ENCODE measurements at regions of chr2 and their contacts with region 1.

Region 1: GRCh38 chr2:54838585-54839035 is 115.1 kb downstream of the EML6 start:
- DNase-seq: peak; percentile 78
- H3K4me3 ChIP-seq: no peak overlapping the region
- H3K27ac ChIP-seq: no peak overlapping the region
- H3K4me1 ChIP-seq: no peaks in the 10 kb centered on the region
- H3K27me3 ChIP-seq: no peaks in the 10 kb centered on the region
- CTCF ChIP-seq: peak; percentile 80 to 87
- POLR2A ChIP-seq: no peak

Region 2: GRCh38 chr2:54106631-54107454 is 731.8 kb before region 1 on chr2:
- CTCF ChIA-PET with region 1: interaction called, 96 read pairs
- POLR2A ChIA-PET with region 1: no interaction called
- dilution Hi-C with region 1: no loop called
- intact Hi-C with region 1: loop called (anchors 2 kb)
- DNase-seq: peak; percentile 69
- H3K4me3 ChIP-seq: no peak overlapping the region
- H3K27ac ChIP-seq: no peak overlapping the region
- H3K4me1 ChIP-seq: peaks cover 11% of the 10 kb centered on the region
- H3K27me3 ChIP-seq: no peaks in the 10 kb centered on the region
- CTCF ChIP-seq: peak; percentile 53 to 56
- POLR2A ChIP-seq: no peak

Region 3: GRCh38 chr2:54558188-54559005 is 280.2 kb before region 1 on chr2:
- CTCF ChIA-PET with region 1: no interaction called
- POLR2A ChIA-PET with region 1: no interaction called
- dilution Hi-C with region 1: no loop called
- intact Hi-C with region 1: no loop called
- DNase-seq: peak; percentile 86
- H3K4me3 ChIP-seq: peak overlapping the region; percentile 50 to 99 (median 99)
- H3K27ac ChIP-seq: peak overlapping the region; percentile 99
- H3K4me1 ChIP-seq: peaks cover 42% of the 10 kb centered on the region
- H3K27me3 ChIP-seq: no peaks in the 10 kb centered on the region
- CTCF ChIP-seq: no peak
- POLR2A ChIP-seq: peak; percentile 53

Region 4: DNA sequence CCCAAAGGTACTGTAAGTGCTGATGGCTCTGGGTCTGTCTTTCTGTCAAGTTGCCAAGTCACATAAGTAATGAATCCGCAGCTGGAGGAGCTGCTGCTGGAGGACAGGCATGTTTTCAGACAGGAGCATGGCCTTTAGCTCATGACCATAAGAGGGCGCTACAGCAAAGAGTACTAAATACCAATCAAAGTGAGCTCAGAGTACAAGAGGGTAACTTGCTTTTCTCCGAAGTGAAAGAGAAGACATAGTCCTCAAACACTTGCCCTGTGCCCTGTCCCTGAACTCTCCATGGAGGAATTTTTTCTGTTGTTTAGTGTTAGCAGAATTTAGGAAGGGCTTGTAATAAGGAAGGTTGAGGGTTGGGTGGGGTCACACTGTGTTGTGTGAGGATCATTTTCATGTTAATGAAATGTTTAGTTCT is 173.2 kb before region 1 on chr2:
- CTCF ChIA-PET with region 1: interaction called, 104 read pairs
- POLR2A ChIA-PET with region 1: no interaction called
- dilution Hi-C with region 1: no loop called
- intact Hi-C with region 1: loop called (anchors 2 kb)
- DNase-seq: peak; percentile 76
- H3K4me3 ChIP-seq: no peak overlapping the region
- H3K27ac ChIP-seq: no peak overlapping the region
- H3K4me1 ChIP-seq: peaks cover 16% of the 10 kb centered on the region
- H3K27me3 ChIP-seq: no peaks in the 10 kb centered on the region
- CTCF ChIP-seq: peak; percentile 74
- POLR2A ChIP-seq: no peak

Region 5: DNA sequence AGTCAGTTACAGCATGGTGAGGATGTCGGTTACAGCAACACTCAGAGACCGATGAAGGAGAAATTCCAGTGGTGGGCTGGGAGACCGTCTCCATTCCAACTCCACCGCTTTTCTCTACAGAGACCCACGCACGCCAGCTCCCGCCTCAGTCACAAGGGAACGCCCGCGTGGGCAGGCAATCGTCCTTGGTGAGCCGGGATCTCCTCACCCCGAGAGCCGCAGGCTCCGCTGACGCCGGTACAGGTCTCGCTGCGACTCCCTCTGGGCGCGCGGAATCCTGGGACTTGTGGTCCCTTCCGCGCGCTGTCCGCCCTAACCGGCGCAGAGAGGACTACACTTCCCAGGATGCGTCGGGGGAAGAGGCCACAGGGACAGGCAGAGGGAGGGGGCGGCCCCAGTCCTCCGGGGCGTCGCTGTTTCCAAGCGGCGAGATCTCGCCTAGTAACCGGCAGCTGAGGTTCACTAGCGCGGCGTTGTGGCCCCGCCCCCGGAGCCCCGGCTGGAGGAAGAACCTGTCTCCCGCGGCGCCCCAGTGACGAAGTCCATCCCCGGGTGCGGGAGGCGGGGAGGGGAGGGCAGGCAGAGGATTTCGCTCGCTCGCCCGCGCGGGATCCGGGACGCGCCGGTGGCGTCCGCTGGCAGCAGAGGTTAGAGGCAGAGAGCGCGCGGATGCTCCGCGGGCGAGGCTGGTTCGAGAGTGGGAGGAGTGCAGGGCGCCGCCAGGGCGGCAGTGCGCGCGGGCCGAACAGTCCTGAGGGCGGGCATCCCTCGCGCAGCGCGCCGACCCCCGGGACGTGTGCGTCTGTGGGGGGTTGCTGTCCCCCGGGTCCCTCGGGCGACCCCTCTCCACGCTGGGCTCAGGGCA is 115.2 kb before region 1 on chr2 and contains the start of gene EML6:
- CTCF ChIA-PET with region 1: interaction called, 48 read pairs
- POLR2A ChIA-PET with region 1: no interaction called
- dilution Hi-C with region 1: no loop called
- intact Hi-C with region 1: loop called (anchors 1 kb)
- DNase-seq: peak; percentile 99
- H3K4me3 ChIP-seq: peak within 1 kb of the TSS; percentile 86 to 99 (median 96)
- H3K27ac ChIP-seq: peak within 1 kb of the TSS; percentile 78
- H3K4me1 ChIP-seq: peaks cover 22% of the 10 kb centered on the region
- H3K27me3 ChIP-seq: peaks cover 11 to 15% of the 10 kb centered on the region in 2 experiments
- CTCF ChIP-seq: peak; percentile 4 to 36
- POLR2A ChIP-seq: peak; percentile 88
- total RNA-seq, gene EML6: 1.3 and 2.1 TPM in 2 replicates

Region 6: DNA sequence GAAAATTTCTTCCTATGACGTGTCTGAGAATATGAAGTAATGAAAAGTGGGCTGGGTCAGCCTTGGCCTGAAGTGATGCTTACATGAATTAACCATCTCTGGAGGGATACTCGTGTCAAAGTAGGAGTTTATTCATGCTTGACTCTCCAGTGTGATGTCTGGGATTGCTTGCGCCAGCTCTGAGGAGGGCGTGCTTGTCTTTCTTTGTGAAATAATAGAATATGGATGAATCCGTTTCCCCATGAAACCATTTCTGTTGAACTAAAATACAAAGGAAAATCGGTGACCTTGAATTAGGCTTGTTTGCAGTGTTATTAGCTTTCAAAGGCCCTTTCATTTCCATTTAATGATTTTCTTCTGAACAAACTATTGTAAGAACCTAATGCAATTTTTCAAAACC is 37.3 kb before region 1 on chr2:
- CTCF ChIA-PET with region 1: interaction called, 10 read pairs
- POLR2A ChIA-PET with region 1: no interaction called
- dilution Hi-C with region 1: no loop called
- intact Hi-C with region 1: no loop called
- DNase-seq: no peak
- H3K4me3 ChIP-seq: no peak overlapping the region
- H3K27ac ChIP-seq: no peak overlapping the region
- H3K4me1 ChIP-seq: no peaks in the 10 kb centered on the region
- H3K27me3 ChIP-seq: peaks cover 1 to 7% of the 10 kb centered on the region in 2 experiments
- CTCF ChIP-seq: no peak
- POLR2A ChIP-seq: no peak

Region 7: GRCh38 chr2:54824567-54824966 is 14.0 kb before region 1 on chr2:
- CTCF ChIA-PET with region 1: interaction called, 23 read pairs
- POLR2A ChIA-PET with region 1: no interaction called
- dilution Hi-C with region 1: no loop called
- intact Hi-C with region 1: no loop called
- DNase-seq: no peak
- H3K4me3 ChIP-seq: no peak overlapping the region
- H3K27ac ChIP-seq: no peak overlapping the region
- H3K4me1 ChIP-seq: no peaks in the 10 kb centered on the region
- H3K27me3 ChIP-seq: peaks cover 15 to 16% of the 10 kb centered on the region in 2 experiments
- CTCF ChIP-seq: no peak
- POLR2A ChIP-seq: no peak

Region 8: GRCh38 chr2:54899576-54900200 is 61.1 kb after region 1 on chr2:
- CTCF ChIA-PET with region 1: interaction called, 13 read pairs
- POLR2A ChIA-PET with region 1: no interaction called
- dilution Hi-C with region 1: no loop called
- intact Hi-C with region 1: no loop called
- DNase-seq: peak; percentile 48
- H3K4me3 ChIP-seq: no peak overlapping the region
- H3K27ac ChIP-seq: no peak overlapping the region
- H3K4me1 ChIP-seq: peaks cover 10% of the 10 kb centered on the region
- H3K27me3 ChIP-seq: peaks cover 5 to 6% of the 10 kb centered on the region in 2 experiments
- CTCF ChIP-seq: peak; percentile 31 to 34
- POLR2A ChIP-seq: no peak